Gastrocnemius medialis (tissue), 4 donors: ENCODE measurements at regions of chr12 and their contacts with region 1.

Region 1: GRCh38 chr12:3073438-3074250 is 3.5 kb upstream of the TSPAN9 start:
- DNase-seq: peak; percentile 54 to 78
- ATAC-seq: peak; percentile 41 to 57
- H3K4me3 ChIP-seq: no peak overlapping the region
- H3K27ac ChIP-seq: peak overlapping the region in 1 of 4 donors; percentile 33
- H3K4me1 ChIP-seq: peaks cover 13 to 28% of the 10 kb centered on the region in 2 donors
- H3K27me3 ChIP-seq: no peaks in the 10 kb centered on the region
- CTCF ChIP-seq: peak; percentile 87 to 99 (median 88)
- POLR2A ChIP-seq: no peak

Region 2: DNA sequence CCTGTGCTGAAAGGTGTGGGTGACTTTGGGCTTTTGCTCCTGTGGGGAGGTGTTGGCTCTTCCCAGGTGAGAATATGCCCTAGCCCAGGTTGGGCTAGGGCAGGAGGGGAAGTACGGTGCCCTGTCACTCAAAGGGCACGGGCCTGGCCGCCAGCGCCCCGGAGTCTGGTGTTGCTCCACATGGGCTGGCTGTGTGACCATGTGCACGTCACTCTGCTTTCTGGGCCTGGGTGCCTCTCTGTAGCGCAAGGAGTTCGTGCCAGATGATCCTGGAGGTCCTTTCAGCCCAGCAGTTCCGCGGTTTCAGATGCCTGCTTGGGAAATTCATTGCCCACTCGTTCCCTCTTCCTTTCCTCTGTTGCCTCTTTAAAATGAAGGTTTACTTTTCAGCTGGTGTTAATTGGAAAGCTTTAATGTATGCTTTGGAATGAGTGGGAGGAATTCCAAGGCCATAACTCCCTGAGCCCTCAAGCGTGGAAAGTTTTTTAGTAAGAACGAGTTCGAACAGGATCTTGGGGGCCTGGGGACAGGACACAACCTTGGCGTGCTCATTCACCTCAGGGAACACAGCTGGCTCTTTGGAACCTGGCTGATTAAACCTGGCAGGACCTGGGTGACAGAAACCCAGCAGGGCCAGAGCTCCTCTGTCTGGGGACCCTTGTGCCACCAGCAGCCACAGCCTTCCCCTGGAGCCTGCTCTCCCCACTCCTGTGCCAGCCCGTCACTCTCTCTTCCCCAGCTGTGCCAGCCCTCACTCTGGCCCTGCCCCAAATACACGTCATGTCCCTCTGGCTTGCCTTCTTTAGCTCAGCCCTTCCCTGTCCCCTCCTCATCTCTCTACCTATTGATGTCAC is 46.3 kb after region 1 on chr12:
- in situ Hi-C with region 1: no loop called
- intact Hi-C with region 1: loop called (anchors 2 kb)
- DNase-seq: peak; percentile 30 to 69
- ATAC-seq: peak; percentile 46 to 58
- H3K4me3 ChIP-seq: no peak overlapping the region
- H3K27ac ChIP-seq: peak overlapping the region; percentile 35 to 61 (median 49)
- H3K4me1 ChIP-seq: peaks cover 39% of the 10 kb centered on the region in 2 donors
- H3K27me3 ChIP-seq: no peaks in the 10 kb centered on the region
- CTCF ChIP-seq: no peak
- POLR2A ChIP-seq: no peak

Region 3: GRCh38 chr12:3202734-3203446 is 129.2 kb after region 1 on chr12:
- in situ Hi-C with region 1: loop called in 1 of 4 experiments (anchors 10 kb)
- intact Hi-C with region 1: loop called (anchors 2 kb)
- DNase-seq: peak in 1 of 2 donors; percentile 42
- ATAC-seq: peak; percentile 41 to 73
- H3K4me3 ChIP-seq: no peak overlapping the region
- H3K27ac ChIP-seq: no peak overlapping the region
- H3K4me1 ChIP-seq: peaks cover 47 to 48% of the 10 kb centered on the region in 2 donors
- H3K27me3 ChIP-seq: no peaks in the 10 kb centered on the region
- CTCF ChIP-seq: peak; percentile 85 to 95 (median 92)
- POLR2A ChIP-seq: no peak

Region 4: GRCh38 chr12:3275171-3276041 is 201.8 kb after region 1 on chr12:
- in situ Hi-C with region 1: loop called (anchors 10 kb)
- intact Hi-C with region 1: loop called (anchors 1 kb)
- DNase-seq: peak; percentile 47 to 64
- ATAC-seq: peak; percentile 76 to 83
- H3K4me3 ChIP-seq: no peak overlapping the region
- H3K27ac ChIP-seq: no peak overlapping the region
- H3K4me1 ChIP-seq: peaks cover 8 to 9% of the 10 kb centered on the region in 2 donors
- H3K27me3 ChIP-seq: no peaks in the 10 kb centered on the region
- CTCF ChIP-seq: peak; percentile 90 to 100 (median 97)
- POLR2A ChIP-seq: no peak